Activated CD4-positive, alpha-beta memory T cell treated with anti-CD3 and anti-CD28 coated beads for 36 hours (primary cell): ENCODE measurements at regions of chr14 and their contacts with region 1.

Region 1: DNA sequence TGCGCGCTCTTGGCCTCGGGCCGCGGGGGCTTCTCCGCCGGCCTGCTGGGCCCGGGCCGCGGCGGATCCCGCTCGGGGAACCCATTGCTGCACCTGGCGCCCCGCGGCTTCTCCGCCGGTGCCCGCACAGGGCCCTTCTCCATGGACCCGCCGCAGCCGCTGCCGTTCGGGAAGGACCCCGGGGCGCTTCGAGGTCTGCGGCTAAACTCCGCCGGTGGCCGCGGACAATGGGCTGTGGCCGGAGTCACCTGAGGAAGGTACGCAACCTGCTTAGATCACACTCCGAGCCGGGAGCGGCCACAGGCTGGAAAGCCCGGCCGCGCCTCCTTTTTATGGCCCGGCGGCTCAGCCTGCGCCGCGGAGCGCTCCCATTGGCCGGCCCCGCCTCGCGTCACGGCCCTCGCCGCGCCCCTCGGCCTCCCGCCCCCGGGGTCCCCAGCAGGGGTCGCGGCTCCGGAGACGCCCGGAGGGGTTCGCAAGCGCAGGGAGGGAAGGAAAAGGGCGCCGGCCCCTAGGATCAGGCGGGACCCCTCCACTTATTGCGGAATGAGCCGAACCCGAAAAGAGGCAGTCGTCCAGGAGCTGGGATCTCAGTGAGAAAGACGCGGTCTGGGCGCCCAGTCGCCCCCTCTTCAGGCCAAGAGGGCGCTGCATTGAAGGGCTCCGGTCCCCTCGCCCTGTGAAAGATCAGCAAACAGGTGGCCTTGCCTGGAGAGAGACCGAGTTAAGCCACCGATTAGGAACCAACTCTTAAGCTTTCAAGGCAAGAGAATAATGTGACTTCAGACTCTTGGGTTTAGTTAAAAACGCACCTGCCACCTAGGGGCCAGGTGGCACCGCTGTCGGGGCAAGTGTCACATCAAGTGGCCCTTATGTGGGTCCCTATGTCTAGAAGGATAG is at the start of gene GCH1:
- DNase-seq: peak; percentile 78
- H3K4me3 Mint-ChIP-seq: peak within 1 kb of the TSS; percentile 87
- H3K27ac Mint-ChIP-seq: peak within 1 kb of the TSS; percentile 87
- H3K4me1 Mint-ChIP-seq: peaks cover 26% of the 10 kb centered on the region
- H3K27me3 Mint-ChIP-seq: no peaks in the 10 kb centered on the region
- total RNA-seq, gene GCH1: 40.8 to 42.3 TPM

Region 2: GRCh38 chr14:54396493-54397335 is 506.1 kb before region 1 on chr14 and contains the start of gene CDKN3:
- CTCF ChIA-PET with region 1: no interaction called
- POLR2A ChIA-PET with region 1: no interaction called
- intact Hi-C with region 1: loop called (anchors 2 kb)
- DNase-seq: peak; percentile 99
- H3K4me3 Mint-ChIP-seq: peak within 1 kb of the TSS; percentile 88
- H3K27ac Mint-ChIP-seq: peak within 1 kb of the TSS; percentile 70
- H3K4me1 Mint-ChIP-seq: peaks cover 17% of the 10 kb centered on the region
- H3K27me3 Mint-ChIP-seq: no peaks in the 10 kb centered on the region
- total RNA-seq, gene CDKN3: 96.2 to 99.2 TPM

Region 3: GRCh38 chr14:54435500-54435981 is 467.2 kb before region 1 on chr14:
- CTCF ChIA-PET with region 1: no interaction called
- POLR2A ChIA-PET with region 1: no interaction called
- intact Hi-C with region 1: loop called (anchors 2 kb)
- DNase-seq: peak; percentile 40
- H3K4me3 Mint-ChIP-seq: peak overlapping the region; percentile 61
- H3K27ac Mint-ChIP-seq: peak overlapping the region; percentile 76
- H3K4me1 Mint-ChIP-seq: peaks cover 82% of the 10 kb centered on the region
- H3K27me3 Mint-ChIP-seq: no peaks in the 10 kb centered on the region

Region 4: DNA sequence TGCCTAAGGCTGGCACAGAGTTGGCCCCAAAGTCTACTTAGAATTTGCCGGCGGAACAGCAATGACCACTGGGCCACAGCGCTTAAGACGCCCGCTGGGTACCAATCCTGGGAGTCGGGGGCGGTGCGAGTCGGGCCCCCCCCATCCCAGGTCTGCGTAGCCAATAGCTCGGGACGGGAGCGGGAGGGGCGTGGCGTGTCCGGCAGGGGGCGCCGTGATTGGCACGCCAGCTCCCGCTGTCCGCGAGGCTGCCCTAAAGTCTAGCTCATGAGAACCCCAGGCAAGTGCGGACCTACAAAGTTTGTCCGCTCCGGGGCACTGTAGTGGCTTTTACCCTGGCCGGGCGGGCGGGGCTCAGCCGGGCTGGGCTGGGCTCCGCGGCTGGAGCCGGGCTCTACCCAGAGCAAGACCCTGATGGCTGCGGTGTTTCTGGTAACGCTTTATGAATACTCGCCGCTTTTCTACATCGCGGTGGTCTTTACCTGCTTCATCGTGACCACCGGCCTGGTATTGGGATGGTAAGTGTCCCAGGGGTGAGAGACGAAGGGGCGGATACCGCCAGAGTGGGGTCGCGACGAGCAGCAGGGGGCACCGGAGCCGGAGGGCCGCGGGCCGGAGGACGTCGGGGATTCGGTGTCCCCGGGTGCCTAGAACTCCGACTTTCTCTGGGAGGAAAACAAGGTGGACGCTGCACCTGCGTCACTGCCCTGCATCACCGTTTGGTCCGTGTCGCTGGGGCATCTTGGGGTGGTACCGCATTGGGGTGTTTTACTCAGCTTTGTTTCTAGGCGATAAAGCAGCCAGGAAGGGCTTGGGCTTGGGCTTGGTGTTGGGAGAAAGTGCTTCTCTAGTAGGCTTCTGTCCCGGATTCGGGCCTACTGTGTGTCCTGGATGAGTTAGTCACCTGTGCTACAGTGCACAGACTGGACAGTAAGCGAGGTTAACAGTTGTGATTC is 392.9 kb before region 1 on chr14 and contains the start of gene CGRRF1:
- CTCF ChIA-PET with region 1: interaction called, 5 read pairs
- POLR2A ChIA-PET with region 1: no interaction called
- intact Hi-C with region 1: loop called (anchors 5 kb)
- DNase-seq: peak; percentile 99
- H3K4me3 Mint-ChIP-seq: peak within 1 kb of the TSS; percentile 94
- H3K27ac Mint-ChIP-seq: peak within 1 kb of the TSS; percentile 76
- H3K4me1 Mint-ChIP-seq: peaks cover 39% of the 10 kb centered on the region
- H3K27me3 Mint-ChIP-seq: no peaks in the 10 kb centered on the region
- total RNA-seq, gene CGRRF1: 13.7 to 15.1 TPM

Region 5: DNA sequence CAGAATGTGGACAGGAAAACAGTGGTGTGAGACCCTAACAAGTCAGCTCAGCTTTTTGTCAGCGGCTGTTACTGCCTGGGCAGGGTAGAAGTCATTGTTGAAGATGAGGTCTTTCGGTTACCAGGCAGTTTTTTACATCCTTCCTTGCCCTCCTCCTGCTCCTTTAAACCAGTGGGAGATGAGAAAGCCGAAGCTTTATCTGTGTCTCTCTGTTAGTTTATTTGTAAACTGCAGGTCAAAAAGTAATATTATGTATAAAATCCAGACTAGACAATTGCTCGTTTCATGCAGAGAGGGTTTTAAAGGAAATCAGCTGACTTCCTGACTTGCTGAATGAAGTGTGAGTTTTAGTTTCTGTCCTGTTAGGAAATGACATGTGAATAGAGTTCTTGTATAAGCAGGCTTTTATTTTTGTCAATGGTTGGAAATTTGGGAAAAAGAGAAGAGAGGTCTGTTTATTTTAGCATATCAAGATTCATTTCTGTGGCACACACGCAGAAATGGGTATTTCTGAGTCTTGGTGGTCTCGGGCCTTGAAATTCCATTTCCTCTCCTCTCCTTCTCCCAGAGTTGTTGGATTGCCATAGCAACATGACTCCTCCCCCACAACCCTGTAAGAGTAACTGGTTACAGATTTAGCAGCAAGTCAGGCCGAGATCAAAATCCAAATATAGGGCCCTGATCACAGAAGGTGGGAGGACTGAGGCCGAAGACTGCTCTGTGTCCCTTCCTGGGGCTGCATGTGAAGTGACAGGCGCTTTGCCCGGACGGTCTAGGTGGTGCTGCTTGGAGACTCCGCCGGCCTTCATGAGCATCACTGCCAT is 275.0 kb before region 1 on chr14:
- CTCF ChIA-PET with region 1: no interaction called
- POLR2A ChIA-PET with region 1: no interaction called
- intact Hi-C with region 1: loop called (anchors 10 kb)
- DNase-seq: peak; percentile 49
- H3K4me3 Mint-ChIP-seq: peak overlapping the region; percentile 55
- H3K27ac Mint-ChIP-seq: peak overlapping the region; percentile 78
- H3K4me1 Mint-ChIP-seq: peaks cover 40% of the 10 kb centered on the region
- H3K27me3 Mint-ChIP-seq: no peaks in the 10 kb centered on the region

Region 6: DNA sequence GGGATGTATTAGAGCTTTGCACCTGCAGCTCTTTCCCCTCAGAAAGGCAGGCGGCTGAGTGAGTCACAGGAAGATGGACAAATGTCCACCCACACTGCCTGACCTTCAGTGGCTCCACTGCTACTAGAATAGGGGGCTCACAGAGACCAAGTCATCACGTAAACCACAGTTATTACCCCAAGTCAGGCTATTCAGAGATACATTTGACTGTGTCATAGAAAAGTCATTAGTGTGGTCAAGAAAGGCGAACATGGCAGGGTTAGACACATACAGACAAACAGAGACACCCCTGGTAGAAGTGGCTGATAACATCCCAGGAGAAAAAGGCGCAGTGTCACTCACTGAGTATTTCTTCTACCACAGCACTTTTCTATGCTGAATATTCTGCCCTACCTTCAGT is 36.2 kb before region 1 on chr14:
- CTCF ChIA-PET with region 1: no interaction called
- POLR2A ChIA-PET with region 1: no interaction called
- intact Hi-C with region 1: no loop called
- DNase-seq: no peak
- H3K4me3 Mint-ChIP-seq: no peak overlapping the region
- H3K27ac Mint-ChIP-seq: no peak overlapping the region
- H3K4me1 Mint-ChIP-seq: peaks cover 20% of the 10 kb centered on the region
- H3K27me3 Mint-ChIP-seq: no peaks in the 10 kb centered on the region

Region 7: DNA sequence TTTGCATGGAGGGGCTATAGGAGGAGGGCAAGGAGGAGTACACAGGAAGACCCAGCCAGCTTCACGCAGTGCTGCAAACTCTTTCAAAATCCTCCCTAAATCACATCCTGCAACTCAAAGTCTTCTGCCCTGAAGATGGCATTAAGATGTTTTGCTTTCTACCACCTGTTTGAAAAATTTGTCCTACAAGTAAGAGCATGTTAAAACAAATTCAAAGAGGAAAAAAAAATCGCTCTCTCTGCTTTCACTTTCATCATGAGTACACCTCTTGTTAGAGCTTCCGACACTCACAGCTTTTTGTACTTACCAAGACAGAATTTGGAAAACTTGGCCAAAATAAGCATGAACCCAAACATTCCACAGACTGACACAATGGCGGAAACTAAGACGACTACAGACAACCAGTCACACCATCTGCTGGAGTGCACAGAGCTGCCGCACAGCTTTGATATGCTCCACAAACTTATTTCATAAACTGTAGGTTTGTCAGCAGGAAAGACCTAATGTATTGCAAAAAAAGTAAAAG is 21.5 kb before region 1 on chr14:
- CTCF ChIA-PET with region 1: interaction called, 15 read pairs
- POLR2A ChIA-PET with region 1: interaction called, 10 read pairs
- intact Hi-C with region 1: loop called (anchors 1 kb)
- DNase-seq: peak; percentile 34
- H3K4me3 Mint-ChIP-seq: peak overlapping the region; percentile 82
- H3K27ac Mint-ChIP-seq: peak overlapping the region; percentile 94
- H3K4me1 Mint-ChIP-seq: peaks cover 46% of the 10 kb centered on the region
- H3K27me3 Mint-ChIP-seq: no peaks in the 10 kb centered on the region

Region 8: DNA sequence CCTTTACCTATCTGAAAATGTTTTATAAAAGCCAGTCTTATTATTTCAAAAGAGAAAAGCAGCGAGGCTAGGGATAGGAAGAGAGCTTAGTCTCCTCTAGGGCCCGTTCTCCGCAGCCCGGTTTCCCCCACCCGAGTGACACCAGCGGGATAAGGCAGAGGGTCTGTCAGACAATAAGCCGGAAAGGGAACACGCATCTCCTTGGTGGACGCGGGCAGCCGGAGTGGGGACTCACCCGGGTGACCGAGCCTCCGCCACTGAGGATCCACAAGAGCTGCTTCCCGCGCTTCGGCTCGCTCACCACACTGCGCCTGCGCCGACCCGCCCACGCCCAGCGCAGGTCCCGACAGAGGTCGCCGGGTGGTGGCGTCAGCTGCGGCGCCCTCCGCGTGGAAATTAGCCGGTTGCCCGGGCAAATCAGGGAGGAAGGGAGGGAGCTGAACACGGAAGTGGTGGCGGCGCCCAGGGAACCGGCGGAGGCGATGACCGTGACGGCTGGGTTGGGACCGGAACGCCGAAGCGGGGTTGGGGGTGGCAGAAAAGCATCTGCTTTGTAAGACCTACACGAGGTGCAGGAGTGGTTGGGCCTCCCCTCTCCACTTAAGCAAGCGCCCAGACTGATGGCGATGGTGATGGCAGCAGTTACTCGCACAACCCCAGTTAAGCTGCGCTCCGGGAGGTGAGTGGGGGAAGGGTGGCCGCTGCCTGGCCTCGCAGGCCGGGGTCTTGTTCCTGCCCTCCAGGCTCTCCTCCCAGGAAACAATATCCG is 124.2 kb after region 1 on chr14 and contains the starts of genes SOCS4 and WDHD1:
- CTCF ChIA-PET with region 1: interaction called, 7 read pairs
- POLR2A ChIA-PET with region 1: interaction called, 7 read pairs
- intact Hi-C with region 1: loop called (anchors 1 kb)
- DNase-seq: peak; percentile 98
- H3K4me3 Mint-ChIP-seq: peak within 1 kb of the TSS; percentile 93
- H3K27ac Mint-ChIP-seq: peak within 1 kb of the TSS; percentile 89
- H3K4me1 Mint-ChIP-seq: peaks cover 44% of the 10 kb centered on the region
- H3K27me3 Mint-ChIP-seq: no peaks in the 10 kb centered on the region
- total RNA-seq, gene SOCS4: 24.4 to 25.3 TPM
- total RNA-seq, gene WDHD1: 62.4 to 63.2 TPM

Region 9: GRCh38 chr14:55038708-55039107 is 135.9 kb after region 1 on chr14:
- CTCF ChIA-PET with region 1: no interaction called
- POLR2A ChIA-PET with region 1: no interaction called
- intact Hi-C with region 1: no loop called
- DNase-seq: no peak
- H3K4me3 Mint-ChIP-seq: no peak overlapping the region
- H3K27ac Mint-ChIP-seq: peak overlapping the region; percentile 7
- H3K4me1 Mint-ChIP-seq: peaks cover 7% of the 10 kb centered on the region
- H3K27me3 Mint-ChIP-seq: no peaks in the 10 kb centered on the region